ENCODE measurements at regions of chr4 and their contacts with region 1.

Region 1: GRCh38 chr4:89657931-89658700 is 178.8 kb downstream of the SNCA start:
- DNase-seq: no peak

Region 2: DNA sequence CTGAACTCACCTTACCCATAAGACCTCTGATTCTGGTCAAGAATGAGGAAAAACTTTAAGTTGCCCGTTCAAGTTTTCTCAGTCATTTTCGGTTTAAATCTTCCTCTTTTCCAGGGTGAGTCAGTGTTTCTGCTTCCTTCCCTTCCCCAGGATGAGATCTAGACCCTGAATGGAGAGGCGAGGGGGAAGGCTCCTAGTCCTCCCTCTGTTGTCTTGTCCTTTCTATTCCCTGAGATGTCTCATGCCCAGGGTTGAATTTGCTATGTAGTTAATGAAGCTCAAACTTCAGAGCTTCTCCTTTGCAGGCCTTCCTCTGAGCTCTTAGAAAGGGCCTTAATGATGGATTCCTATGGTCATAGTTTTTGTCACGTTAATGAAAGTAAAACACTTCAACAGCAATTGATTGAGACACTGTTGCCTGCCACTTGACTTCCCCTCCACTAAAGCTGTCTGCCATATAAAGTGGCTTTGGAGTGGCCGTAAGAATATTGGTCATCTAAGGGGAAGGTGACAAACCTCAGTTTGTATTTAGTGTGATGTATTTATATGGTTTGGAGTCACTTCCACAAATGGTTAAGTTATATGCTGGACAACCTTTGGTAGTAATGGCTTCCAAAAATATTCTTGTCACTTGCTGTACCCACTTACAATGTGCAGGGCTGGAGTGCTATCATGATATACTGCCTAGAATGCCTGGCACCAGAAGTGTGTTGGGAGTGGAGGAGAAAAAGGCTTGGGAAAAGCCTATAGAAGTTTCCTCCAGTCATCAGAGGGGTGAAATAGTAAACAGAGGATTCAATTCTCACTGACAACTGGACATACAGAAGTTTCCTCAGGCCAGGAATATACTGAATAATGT is 326.2 kb before region 1 on chr4:
- intact Hi-C with region 1: no loop called
- DNase-seq: no peak

Region 3: GRCh38 chr4:89708903-89709421 is 50.8 kb after region 1 on chr4:
- intact Hi-C with region 1: loop called (anchors 5 kb)
- DNase-seq: peak in 6 of 10 donors; percentile 13 to 72 (median 24)

Region 4: GRCh38 chr4:89868999-89869589 is 211.0 kb after region 1 on chr4:
- intact Hi-C with region 1: loop called (anchors 10 kb)
- DNase-seq: no peak

Measured in posterior cingulate gyrus (tissue), 11 donors.